ENCODE measurements at regions of chr5 and their contacts with region 1.

Region 1: GRCh38 chr5:73088026-73088425 is 32.3 kb upstream of the TMEM171 start:
- DNase-seq: no peak
- H3K4me3 ChIP-seq: no peak overlapping the region
- H3K27ac ChIP-seq: no peak overlapping the region
- H3K27me3 ChIP-seq: no peaks in the 10 kb centered on the region
- CTCF ChIP-seq: no peak

Region 2: DNA sequence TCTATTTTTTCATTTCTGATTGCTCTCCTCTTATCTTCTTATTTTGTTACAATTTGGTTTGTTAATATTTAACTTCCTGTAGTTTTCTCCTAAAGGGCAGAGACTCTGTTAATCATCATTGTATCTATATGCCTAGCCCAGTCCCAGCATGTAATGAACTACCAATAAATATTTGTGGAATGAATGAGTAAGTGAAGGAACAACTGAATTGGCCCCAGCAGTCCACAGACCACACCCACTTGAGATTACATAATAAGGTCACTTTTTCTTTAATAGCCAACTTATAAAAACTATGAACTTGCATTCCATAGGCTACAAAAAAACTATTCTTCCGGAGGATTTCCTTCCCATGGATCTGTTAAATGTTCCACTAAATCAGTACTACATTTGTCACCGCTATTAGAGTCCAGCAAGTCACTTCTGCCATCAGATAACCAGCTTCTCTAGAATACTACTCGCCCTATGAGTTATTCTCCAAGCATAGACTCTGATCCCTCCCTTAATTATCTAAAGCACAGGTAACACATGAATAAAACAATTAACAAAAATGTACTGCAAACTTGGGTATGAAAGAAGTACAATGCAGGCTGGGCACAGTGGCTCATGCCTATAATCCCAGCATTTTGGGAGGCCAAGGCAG is 299.0 kb before region 1 on chr5:
- intact Hi-C with region 1: no loop called
- DNase-seq: no peak
- H3K4me3 ChIP-seq: no peak overlapping the region
- H3K27ac ChIP-seq: no peak overlapping the region
- H3K27me3 ChIP-seq: no peaks in the 10 kb centered on the region
- CTCF ChIP-seq: no peak

Region 3: DNA sequence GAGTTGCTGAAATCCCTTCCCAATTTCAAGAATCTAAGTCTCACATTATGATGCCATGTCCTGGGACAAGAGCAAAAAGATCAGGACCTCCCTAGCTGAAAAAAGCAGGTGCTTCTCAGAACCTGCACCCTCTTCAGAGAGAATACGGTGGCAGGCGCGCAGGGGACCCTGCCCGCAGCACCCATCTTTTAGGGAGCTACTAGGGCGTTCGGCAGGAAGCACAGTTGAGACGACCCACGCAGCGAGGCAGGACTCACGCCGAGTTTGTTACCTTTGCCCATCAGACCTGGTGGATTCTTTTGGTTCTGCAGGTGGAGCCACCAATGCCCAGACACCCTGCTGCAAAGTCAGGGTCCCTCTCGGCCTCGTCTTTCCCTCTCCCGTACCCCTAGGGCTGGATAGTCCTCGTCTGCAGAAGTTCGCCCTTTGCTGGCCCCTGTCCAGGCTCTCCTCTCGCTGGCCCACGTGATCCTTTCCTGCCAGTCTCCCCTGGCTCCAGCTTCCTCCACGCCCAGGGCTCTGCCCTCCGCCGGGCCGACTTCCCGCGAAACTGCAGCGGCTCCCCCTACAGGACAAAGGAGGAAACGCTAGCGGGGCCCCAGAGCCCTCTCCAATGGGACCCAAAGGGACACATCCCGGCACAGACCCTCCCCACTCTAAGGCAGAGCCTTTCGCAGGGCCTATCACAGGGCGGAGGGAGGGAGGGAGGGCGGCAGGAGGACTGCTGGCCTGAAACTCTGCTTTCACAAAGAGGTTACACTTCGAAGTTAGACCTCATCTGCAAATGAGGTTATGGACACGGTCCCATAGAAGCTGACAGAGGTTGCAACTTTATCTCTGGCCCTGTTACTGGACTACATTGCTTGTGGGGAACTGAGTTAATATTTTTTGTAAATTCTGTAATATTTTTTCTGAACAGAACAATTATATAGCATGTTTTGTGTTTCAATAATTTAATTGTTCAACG is 113.8 kb after region 1 on chr5:
- intact Hi-C with region 1: loop called (anchors 2 to 10 kb)
- DNase-seq: peak in 9 of 10 donors; percentile 9 to 74 (median 55)
- H3K4me3 ChIP-seq: peak overlapping the region in 10 of 59 donors; percentile 0 to 47 (median 21)
- H3K27ac ChIP-seq: no peak overlapping the region
- H3K27me3 ChIP-seq: peaks cover 0 to 35% (median 11%) of the 10 kb centered on the region in 45 donors
- CTCF ChIP-seq: peak; percentile 30 to 89 (median 76)

Measured in dorsolateral prefrontal cortex (tissue), 120 donors.